ENCODE measurements at regions of chr9 and their contacts with region 1.

Region 1: GRCh38 chr9:84592918-84593317 is 76.6 kb upstream of the NTRK2 start:
- DNase-seq: no peak
- H3K4me3 ChIP-seq: no peak overlapping the region
- H3K27ac ChIP-seq: no peak overlapping the region
- H3K4me1 ChIP-seq: no peaks in the 10 kb centered on the region
- H3K27me3 ChIP-seq: no peaks in the 10 kb centered on the region
- CTCF ChIP-seq: no peak

Region 2: DNA sequence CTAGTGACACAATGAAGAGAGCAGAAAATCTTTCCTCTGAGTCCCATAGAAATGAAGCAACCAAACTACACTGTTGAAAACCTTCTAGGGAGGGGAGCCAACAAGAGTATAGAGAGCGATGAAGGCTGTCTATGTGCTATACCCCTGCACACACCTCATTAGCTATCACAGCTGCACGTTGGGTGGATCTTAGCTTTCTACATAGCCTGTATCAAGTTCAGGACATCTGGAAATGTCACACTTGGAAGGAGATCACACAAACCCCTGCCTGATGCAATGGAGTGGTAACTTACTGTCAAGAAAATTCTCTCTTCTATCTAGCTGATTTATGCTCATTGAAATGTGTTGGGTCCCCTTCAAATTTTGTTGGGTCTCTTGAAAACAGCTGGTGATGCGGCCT is 50.4 kb before region 1 on chr9:
- CTCF ChIA-PET with region 1: no interaction called
- POLR2A ChIA-PET with region 1: no interaction called
- intact Hi-C with region 1: loop called (anchors 5 kb)
- DNase-seq: no peak
- H3K4me3 ChIP-seq: no peak overlapping the region
- H3K27ac ChIP-seq: no peak overlapping the region
- H3K4me1 ChIP-seq: no peaks in the 10 kb centered on the region
- H3K27me3 ChIP-seq: no peaks in the 10 kb centered on the region
- CTCF ChIP-seq: no peak

Region 3: DNA sequence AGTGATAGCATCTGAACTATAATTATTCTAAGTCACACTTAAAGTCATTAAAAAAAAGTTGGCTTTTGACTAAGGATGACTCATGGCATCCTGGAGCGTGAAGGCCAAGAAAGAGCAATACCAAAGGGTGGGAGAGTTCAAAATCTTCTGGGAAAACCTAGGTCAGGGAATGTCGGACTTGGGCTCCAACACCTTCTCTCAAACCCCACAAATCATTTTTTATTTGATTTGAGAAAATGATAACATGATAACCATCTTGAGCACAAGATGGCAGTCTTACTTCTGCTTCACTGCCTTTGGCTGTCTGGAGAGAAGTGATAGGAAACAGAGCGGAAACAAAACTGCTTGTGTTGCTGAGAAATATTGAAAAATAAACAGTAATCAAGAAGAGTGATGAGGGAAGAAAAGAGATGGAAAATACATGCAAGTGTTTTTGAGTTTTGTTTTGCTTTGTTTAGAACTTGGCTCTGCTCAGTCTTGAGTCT is 59.7 kb after region 1 on chr9:
- CTCF ChIA-PET with region 1: no interaction called
- POLR2A ChIA-PET with region 1: no interaction called
- intact Hi-C with region 1: no loop called
- DNase-seq: peak; percentile 32
- H3K4me3 ChIP-seq: no peak overlapping the region
- H3K27ac ChIP-seq: no peak overlapping the region
- H3K4me1 ChIP-seq: no peaks in the 10 kb centered on the region
- H3K27me3 ChIP-seq: no peaks in the 10 kb centered on the region
- CTCF ChIP-seq: peak; percentile 25; the same call in 1 of the 2 replicates

Measured in A673 (cell line).